ENCODE measurements at regions of chr6 and their contacts with region 1.

Region 1: GRCh38 chr6:43013843-43014433 is at the starts of genes KLHDC3 and MEA1:
- DNase-seq: peak; percentile 100
- H3K4me3 Mint-ChIP-seq: peak within 1 kb of the TSS; percentile 99
- H3K27ac Mint-ChIP-seq: peak within 1 kb of the TSS; percentile 99
- H3K4me1 Mint-ChIP-seq: peaks cover 32% of the 10 kb centered on the region
- H3K27me3 Mint-ChIP-seq: no peaks in the 10 kb centered on the region
- CTCF ChIP-seq: no peak
- total RNA-seq, gene KLHDC3: 35.6 and 39.2 TPM in 2 replicates
- total RNA-seq, gene MEA1: 71.8 and 79.9 TPM in 2 replicates

Region 2: GRCh38 chr6:42745707-42746462 is 268.1 kb before region 1 on chr6 and contains the start of gene TBCC:
- CTCF ChIA-PET with region 1: no interaction called
- POLR2A ChIA-PET with region 1: interaction called, 12 read pairs
- intact Hi-C with region 1: no loop called
- DNase-seq: peak; percentile 99
- H3K4me3 Mint-ChIP-seq: peak within 1 kb of the TSS; percentile 83
- H3K27ac Mint-ChIP-seq: peak within 1 kb of the TSS; percentile 95
- H3K4me1 Mint-ChIP-seq: peaks cover 24% of the 10 kb centered on the region
- H3K27me3 Mint-ChIP-seq: no peaks in the 10 kb centered on the region
- CTCF ChIP-seq: no peak
- total RNA-seq, gene TBCC: 13.7 and 19.4 TPM in 2 replicates

Region 3: DNA sequence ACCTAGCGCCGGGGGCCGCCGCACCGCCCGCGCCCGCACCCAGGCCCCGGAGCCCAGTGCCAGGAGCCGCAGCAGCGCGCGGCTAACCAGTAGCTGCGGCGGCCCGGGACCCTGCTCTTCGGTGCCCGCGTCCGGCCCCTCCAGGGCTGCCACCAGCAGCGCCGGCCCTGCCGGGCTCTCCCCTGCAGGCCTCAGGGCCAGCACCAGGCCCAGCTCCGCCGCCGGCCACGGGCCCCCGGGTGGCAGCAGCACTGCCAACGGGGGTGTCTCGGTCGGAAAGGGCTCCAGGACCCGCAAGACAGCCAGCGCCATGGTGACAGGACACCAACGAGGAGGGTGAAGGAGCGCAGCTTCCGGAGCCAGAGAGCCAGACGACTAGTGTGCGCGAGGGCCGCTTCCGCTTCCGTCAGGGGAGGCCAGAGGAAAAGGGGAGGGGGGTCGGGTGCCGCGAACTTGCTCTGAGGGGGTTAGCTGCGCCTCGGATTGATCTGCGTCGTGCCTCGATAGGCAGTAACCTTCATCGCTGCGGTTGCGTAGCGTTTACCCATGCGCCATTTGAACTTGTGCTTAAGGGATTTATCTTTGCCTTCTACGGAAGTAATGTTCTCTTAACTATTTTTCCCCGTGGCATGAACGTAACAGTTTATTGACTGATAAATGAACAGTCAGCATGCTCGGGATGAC is 35.0 kb before region 1 on chr6 and contains the start of gene PEX6:
- CTCF ChIA-PET with region 1: no interaction called
- POLR2A ChIA-PET with region 1: interaction called, 46 read pairs
- intact Hi-C with region 1: loop called (anchors 1 kb)
- DNase-seq: peak; percentile 91
- H3K4me3 Mint-ChIP-seq: peak within 1 kb of the TSS; percentile 87
- H3K27ac Mint-ChIP-seq: peak within 1 kb of the TSS; percentile 91
- H3K4me1 Mint-ChIP-seq: peaks cover 15% of the 10 kb centered on the region
- H3K27me3 Mint-ChIP-seq: no peaks in the 10 kb centered on the region
- CTCF ChIP-seq: no peak
- total RNA-seq, gene PEX6: 25.8 and 34.0 TPM in 2 replicates

Region 4: GRCh38 chr6:42996513-42996912 is 17.4 kb before region 1 on chr6:
- CTCF ChIA-PET with region 1: interaction called, 4 read pairs
- POLR2A ChIA-PET with region 1: interaction called, 30 read pairs
- intact Hi-C with region 1: no loop called
- DNase-seq: no peak
- H3K4me3 Mint-ChIP-seq: no peak overlapping the region
- H3K27ac Mint-ChIP-seq: no peak overlapping the region
- H3K4me1 Mint-ChIP-seq: no peaks in the 10 kb centered on the region
- H3K27me3 Mint-ChIP-seq: no peaks in the 10 kb centered on the region
- CTCF ChIP-seq: no peak

Region 5: DNA sequence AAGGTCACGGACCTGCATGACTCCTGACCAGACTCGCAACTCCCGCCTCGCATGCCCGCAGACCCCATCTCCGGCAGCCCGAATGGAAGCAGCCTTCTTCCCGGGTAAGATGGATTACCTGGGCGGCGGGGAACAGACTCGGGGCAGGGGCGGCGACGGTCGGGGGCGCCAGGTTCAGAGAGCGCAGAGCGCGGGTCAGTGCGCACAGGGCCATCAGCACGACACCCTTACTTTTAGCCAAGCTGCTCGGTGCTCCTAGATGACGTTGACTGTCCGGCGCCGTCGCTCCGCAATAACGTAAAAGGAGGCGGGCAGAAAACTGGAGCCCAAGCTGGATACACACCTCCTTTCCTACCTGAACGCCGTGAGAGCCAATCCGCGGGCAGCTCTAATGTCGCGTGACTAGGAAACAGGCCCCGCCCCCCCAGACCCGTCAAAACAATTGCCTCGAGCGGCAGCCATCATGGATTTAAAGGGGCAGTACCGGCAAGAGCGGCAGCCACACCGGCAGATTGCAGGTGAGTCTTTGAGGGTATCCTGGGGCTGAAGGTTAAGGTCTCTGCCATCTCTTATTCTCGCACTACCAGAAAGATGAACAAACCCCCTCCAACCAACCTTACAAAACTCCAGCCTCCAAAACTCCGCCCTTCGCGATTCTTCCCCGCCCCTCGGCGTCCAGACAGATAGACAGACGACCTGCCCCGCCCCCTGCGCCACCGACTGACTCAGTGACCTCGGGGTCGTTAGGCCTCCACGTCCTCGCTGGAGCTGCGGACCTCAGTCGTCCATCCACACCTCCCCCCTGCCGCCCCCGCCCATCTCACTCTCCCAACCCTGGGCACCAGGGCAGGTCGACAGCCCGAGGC is 45.5 kb after region 1 on chr6 and contains the starts of genes KLC4 and MRPL2:
- CTCF ChIA-PET with region 1: interaction called, 4 read pairs
- POLR2A ChIA-PET with region 1: interaction called, 53 read pairs
- intact Hi-C with region 1: loop called (anchors 5 kb)
- DNase-seq: peak; percentile 99
- H3K4me3 Mint-ChIP-seq: peak within 1 kb of the TSS; percentile 94
- H3K27ac Mint-ChIP-seq: peak within 1 kb of the TSS; percentile 96
- H3K4me1 Mint-ChIP-seq: peaks cover 28% of the 10 kb centered on the region
- H3K27me3 Mint-ChIP-seq: no peaks in the 10 kb centered on the region
- CTCF ChIP-seq: no peak
- total RNA-seq, gene KLC4: 17.5 and 23.4 TPM in 2 replicates
- total RNA-seq, gene MRPL2: 155 and 174 TPM in 2 replicates

Region 6: DNA sequence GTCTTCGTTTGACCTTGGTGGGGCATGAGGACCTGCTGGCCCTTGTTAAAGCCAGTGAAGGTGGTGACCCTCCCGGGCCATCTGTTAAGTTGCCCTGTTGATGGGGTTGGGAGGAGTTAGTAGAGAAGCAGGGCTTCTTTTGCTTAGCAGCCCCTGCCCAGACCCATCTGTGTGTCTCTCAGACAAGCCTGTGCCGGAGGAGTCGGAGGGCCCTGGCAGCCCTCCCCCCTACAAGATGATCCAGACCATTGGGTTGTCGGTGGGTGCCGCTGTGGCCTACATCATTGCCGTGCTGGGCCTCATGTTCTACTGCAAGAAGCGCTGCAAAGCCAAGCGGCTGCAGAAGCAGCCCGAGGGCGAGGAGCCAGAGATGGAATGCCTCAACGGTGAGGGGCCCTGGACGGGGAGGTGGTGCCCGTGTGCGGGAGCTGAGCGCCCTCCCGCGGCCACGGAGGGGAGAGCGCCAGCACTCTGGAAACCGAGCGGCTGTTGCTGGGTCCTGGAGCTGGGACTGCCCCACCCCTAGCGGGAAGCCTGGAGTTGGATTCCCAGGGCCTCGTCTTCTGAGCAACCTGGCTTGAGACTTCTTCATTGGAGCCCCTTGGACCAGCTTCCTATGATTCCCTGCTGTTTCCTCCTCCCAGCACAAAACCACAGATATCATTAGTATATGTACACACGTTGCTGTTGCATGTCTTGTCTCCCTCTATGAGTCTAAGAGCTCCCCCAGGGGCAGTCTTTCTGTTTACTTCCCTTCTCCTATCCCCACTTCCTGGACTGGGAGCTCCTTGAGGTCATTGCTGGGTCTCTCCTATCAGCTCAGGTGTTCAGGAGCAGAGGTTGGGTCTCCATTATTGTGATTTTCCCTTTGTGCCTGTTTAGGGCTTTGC is 129.5 kb after region 1 on chr6:
- CTCF ChIA-PET with region 1: interaction called, 11 read pairs
- POLR2A ChIA-PET with region 1: no interaction called
- intact Hi-C with region 1: no loop called
- DNase-seq: peak; percentile 80
- H3K4me3 Mint-ChIP-seq: no peak overlapping the region
- H3K27ac Mint-ChIP-seq: no peak overlapping the region
- H3K4me1 Mint-ChIP-seq: peaks cover 18% of the 10 kb centered on the region
- H3K27me3 Mint-ChIP-seq: no peaks in the 10 kb centered on the region
- CTCF ChIP-seq: peak; percentile 94